PC-9 (cell line): ENCODE measurements at regions of chr12 and their contacts with region 1.

Region 1: DNA sequence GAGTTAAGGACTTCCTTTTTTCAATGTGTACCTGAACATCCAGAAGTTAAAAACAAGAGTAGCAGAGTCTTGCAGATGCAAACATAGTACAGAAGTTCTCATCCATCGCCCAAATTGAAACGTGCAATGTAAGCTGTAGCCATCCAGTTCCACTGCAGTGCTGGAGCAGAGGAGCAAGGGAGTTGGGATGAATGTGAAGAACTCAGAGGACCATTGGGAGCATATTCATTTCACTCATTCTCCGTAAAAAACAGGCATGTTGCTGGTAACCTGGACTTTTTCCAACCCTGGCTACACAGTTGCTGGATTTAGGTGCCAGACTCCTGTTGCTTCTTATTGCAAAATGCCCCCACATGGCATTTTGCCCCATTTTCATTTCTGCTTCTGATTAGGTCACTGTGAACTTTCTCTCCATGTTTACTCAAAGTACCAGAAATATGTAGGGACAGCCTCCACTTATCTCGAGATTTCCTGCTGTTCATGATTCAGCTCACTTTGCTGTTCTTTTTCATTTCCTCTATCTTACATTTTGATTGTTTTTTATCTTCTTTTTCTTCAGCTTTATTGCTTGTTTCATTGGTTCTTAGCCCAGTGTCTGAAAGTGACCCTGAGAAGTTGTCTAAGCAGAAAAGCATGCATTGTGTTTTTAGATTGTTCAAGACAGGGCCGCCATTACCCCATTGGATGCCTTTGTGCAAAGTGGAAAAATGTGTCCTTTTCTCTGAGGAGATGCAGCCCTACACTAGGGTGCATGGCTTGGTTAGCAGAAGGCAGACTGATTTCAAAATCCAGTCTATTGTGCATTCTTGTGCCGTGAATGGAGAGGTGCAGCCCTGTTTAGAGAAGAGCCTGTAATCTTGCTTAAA is 109.0 kb upstream of the AMIGO2 start:
- DNase-seq: peak in 1 of 2 experiments; percentile 39
- H3K4me3 ChIP-seq: no peak overlapping the region
- H3K27ac ChIP-seq: peak overlapping the region; percentile 36; the same call in 1 of the 2 replicates
- H3K4me1 ChIP-seq: peaks cover 54% of the 10 kb centered on the region
- H3K27me3 ChIP-seq: no peaks in the 10 kb centered on the region
- CTCF ChIP-seq: no peak

Region 2: GRCh38 chr12:47085815-47086252 is 103.0 kb before region 1 on chr12:
- CTCF ChIA-PET with region 1: no interaction called
- POLR2A ChIA-PET with region 1: no interaction called
- intact Hi-C with region 1: loop called (anchors 2 kb)
- DNase-seq: no peak
- H3K4me3 ChIP-seq: no peak overlapping the region
- H3K27ac ChIP-seq: no peak overlapping the region
- H3K4me1 ChIP-seq: peaks cover 37% of the 10 kb centered on the region
- H3K27me3 ChIP-seq: no peaks in the 10 kb centered on the region
- CTCF ChIP-seq: no peak

Region 3: DNA sequence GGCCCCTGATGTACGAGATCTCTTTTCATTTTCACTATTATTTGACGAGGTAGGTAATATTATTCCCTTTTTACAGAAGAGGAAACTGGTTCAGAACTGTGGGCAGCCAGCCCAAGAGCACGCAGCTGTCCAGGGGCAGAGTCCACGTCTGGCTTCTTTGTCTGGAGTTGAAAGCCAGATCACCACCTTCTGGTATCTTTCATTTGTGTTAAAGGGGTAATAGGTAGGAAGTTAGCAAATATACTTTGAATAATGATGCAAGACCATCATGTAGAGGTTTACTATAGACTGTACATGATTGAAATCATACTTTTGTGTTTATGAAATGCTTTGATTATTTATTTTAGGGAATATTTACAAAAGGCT is 35.0 kb after region 1 on chr12:
- CTCF ChIA-PET with region 1: no interaction called
- POLR2A ChIA-PET with region 1: no interaction called
- intact Hi-C with region 1: loop called (anchors 5 kb)
- DNase-seq: no peak
- H3K4me3 ChIP-seq: no peak overlapping the region
- H3K27ac ChIP-seq: no peak overlapping the region
- H3K4me1 ChIP-seq: peaks cover 42% of the 10 kb centered on the region
- H3K27me3 ChIP-seq: no peaks in the 10 kb centered on the region
- CTCF ChIP-seq: no peak

Region 4: GRCh38 chr12:47247433-47247832 is 58.6 kb after region 1 on chr12:
- CTCF ChIA-PET with region 1: no interaction called
- POLR2A ChIA-PET with region 1: interaction called, 16 read pairs
- intact Hi-C with region 1: no loop called
- DNase-seq: peak; percentile 60 to 81
- H3K4me3 ChIP-seq: no peak overlapping the region
- H3K27ac ChIP-seq: peak overlapping the region; percentile 66
- H3K4me1 ChIP-seq: peaks cover 65% of the 10 kb centered on the region
- H3K27me3 ChIP-seq: no peaks in the 10 kb centered on the region
- CTCF ChIP-seq: no peak

Region 5: DNA sequence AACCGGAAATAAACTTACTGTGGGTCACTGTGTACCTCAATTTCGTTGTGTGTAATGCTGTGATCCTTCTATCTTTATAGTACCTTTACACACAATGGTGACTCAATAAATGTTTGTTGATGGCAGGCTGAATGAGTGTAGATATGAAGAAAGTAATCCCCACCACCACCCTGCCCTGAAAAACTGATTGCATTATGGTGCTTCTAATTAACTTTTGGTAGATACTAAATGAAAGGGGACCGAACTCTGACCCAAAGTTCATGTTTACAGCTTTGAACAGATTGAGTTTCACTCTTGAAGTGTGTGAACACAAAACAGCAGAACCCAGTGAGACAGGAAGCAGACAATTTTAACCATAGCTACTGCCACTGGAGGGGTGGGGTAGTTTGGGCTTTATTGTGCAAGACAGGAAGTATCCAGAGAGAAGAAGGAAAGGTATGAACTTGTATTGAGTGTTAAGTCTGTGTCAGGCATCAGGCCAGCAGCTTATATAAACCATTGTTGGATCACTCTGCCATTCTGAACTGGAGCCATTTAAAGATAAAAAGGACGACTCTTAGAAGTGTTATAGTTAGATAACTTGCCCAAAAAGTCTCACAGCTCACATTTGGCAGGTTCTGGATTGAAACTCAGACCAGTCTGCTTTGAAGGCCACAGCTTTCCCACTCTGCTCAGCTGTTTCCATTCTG is 88.0 kb after region 1 on chr12:
- CTCF ChIA-PET with region 1: interaction called, 6 read pairs
- POLR2A ChIA-PET with region 1: interaction called, 6 read pairs
- intact Hi-C with region 1: loop called (anchors 2 kb)
- DNase-seq: peak; percentile 64 to 80
- H3K4me3 ChIP-seq: peak overlapping the region; percentile 1; the same call in 1 of the 2 replicates
- H3K27ac ChIP-seq: peak overlapping the region; percentile 93
- H3K4me1 ChIP-seq: peaks cover 76% of the 10 kb centered on the region
- H3K27me3 ChIP-seq: no peaks in the 10 kb centered on the region
- CTCF ChIP-seq: no peak

Region 6: GRCh38 chr12:47317175-47317915 is 128.5 kb after region 1 on chr12:
- CTCF ChIA-PET with region 1: no interaction called
- POLR2A ChIA-PET with region 1: no interaction called
- intact Hi-C with region 1: no loop called
- DNase-seq: no peak
- H3K4me3 ChIP-seq: no peak overlapping the region
- H3K27ac ChIP-seq: no peak overlapping the region
- H3K4me1 ChIP-seq: no peaks in the 10 kb centered on the region
- H3K27me3 ChIP-seq: no peaks in the 10 kb centered on the region
- CTCF ChIP-seq: no peak